ENCODE measurements at regions of chr1 and their contacts with region 1.

Region 1: GRCh38 chr1:23098463-23099170 is 70.0 kb downstream of the LUZP1 start:
- DNase-seq: peak; percentile 49
- H3K4me3 Mint-ChIP-seq: no peak overlapping the region
- H3K27ac Mint-ChIP-seq: peak overlapping the region; percentile 5
- H3K4me1 Mint-ChIP-seq: peaks cover 48% of the 10 kb centered on the region
- H3K27me3 Mint-ChIP-seq: no peaks in the 10 kb centered on the region

Region 2: GRCh38 chr1:22976461-22977243 is 122.0 kb before region 1 on chr1:
- intact Hi-C with region 1: loop called (anchors 1 kb)
- DNase-seq: peak; percentile 38
- H3K4me3 Mint-ChIP-seq: no peak overlapping the region
- H3K27ac Mint-ChIP-seq: no peak overlapping the region
- H3K4me1 Mint-ChIP-seq: no peaks in the 10 kb centered on the region
- H3K27me3 Mint-ChIP-seq: peaks cover 21% of the 10 kb centered on the region

Region 3: DNA sequence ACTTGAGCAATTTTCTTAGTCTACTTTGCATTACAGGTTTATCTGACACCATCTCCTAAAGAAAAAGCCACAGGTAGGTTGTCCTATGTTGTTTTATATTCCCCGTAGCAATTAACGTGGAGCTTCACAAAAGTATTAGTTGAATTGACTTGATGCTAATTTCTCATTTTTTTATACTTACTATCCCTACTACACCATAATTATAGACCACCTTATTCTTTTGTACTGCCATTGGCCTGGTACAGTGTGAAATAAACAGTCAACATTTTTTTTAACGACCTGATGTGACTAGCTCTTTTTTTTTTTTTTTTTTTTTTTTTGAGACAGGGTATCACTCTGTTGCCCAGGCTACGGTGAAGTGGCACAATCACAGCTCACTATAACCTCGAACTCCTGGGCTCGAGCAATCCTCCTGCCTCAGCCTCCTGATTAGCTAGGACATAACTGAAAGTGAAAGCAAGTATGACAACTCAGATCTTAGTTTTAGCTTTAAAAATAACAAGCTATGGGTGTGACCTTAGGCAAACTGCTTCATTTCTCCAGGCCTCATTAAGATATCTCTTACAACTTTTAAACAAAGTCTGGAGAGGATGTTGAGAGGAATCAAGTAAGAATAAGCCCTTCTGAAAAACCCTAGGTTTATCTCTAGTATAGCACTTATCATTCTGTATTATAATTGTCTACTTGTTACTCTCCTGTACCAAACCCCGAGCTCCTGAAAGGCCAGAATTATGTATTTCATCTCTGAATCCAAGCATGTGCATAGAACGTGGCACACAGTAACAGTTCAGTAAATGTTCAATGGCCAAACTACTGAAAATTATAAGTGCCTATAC is 20.6 kb after region 1 on chr1:
- intact Hi-C with region 1: loop called (anchors 1 kb)
- DNase-seq: peak; percentile 44
- H3K4me3 Mint-ChIP-seq: peak overlapping the region; percentile 9
- H3K27ac Mint-ChIP-seq: peak overlapping the region; percentile 67
- H3K4me1 Mint-ChIP-seq: peaks cover 70% of the 10 kb centered on the region
- H3K27me3 Mint-ChIP-seq: no peaks in the 10 kb centered on the region

Region 4: GRCh38 chr1:23168457-23169194 is 70.0 kb after region 1 on chr1 and contains the start of gene LUZP1:
- intact Hi-C with region 1: loop called (anchors 1 kb)
- DNase-seq: peak; percentile 82
- H3K4me3 Mint-ChIP-seq: peak within 1 kb of the TSS; percentile 99
- H3K27ac Mint-ChIP-seq: peak within 1 kb of the TSS; percentile 93
- H3K4me1 Mint-ChIP-seq: peaks cover 25% of the 10 kb centered on the region
- H3K27me3 Mint-ChIP-seq: no peaks in the 10 kb centered on the region
- total RNA-seq, gene LUZP1: 23.3 and 27.7 TPM in 2 replicates

Region 5: GRCh38 chr1:23278717-23279116 is 180.1 kb after region 1 on chr1:
- intact Hi-C with region 1: loop called (anchors 5 kb)
- DNase-seq: no peak
- H3K4me3 Mint-ChIP-seq: no peak overlapping the region
- H3K27ac Mint-ChIP-seq: no peak overlapping the region
- H3K4me1 Mint-ChIP-seq: no peaks in the 10 kb centered on the region
- H3K27me3 Mint-ChIP-seq: peaks cover 7% of the 10 kb centered on the region

Measured in activated T-helper 1 cell treated with anti-CD3 and anti-CD28 coated beads, Interleukin-12 subunit alpha, Interleukin-12 subunit beta, Interleukin-2, Interleukin-4 antibody, amounts not matched to agents 30 ng/mL and 10 ng/mL and 1 ng/mL, durations not matched to agents 14 hours and 24 hours and 36 hours (primary cell).